ENCODE measurements at regions of chr17 and their contacts with region 1.

Region 1: DNA sequence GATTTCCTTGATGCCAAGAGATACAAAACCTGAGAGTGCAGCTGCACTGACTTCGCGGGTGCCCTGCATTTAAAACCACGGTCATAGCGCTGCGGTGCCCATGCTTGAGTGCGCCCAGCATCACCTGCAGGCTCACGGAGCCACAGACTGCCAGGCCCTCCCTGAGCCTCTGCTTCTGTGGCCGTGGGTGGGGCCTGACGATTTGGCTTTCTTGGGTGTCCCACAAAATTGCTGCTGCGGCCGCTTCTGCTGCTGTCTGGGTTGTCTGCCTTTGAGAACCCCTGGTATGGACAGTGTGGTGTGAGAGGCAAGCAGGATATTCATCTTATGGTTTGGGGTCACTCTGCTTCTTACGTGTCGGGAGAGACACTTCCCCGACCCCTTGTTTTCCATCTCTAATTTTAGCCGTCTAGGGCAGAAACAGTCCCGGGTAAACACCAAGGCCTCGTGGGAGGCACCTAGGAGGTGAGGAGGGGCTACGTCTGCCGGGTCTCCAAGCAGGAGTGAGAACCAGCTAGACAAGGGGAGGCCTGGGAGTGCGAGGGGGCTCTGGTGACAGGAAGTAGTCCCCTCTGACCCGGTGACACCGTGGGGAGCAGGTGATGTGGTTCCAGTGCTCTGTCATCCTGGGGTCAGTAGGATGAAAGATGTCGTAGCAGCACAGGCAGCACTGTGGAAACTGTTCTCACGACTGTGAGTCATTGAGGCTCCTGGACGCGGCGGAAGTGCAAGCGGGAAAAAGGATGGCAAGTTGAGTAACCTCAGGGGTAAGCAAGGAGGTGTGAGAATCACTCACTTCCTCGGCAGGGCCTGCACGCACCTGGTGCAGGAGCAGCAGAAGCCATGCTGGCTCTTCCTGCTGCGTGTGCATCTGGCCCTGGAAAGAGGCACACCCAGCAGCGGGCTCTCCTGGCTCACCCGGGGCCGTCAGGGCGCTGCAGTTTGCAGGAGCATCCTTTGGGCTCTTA is 176.3 kb downstream of the RPTOR start:
- DNase-seq: peak; percentile 87
- ATAC-seq: peak; percentile 94
- H3K4me3 Mint-ChIP-seq: peak overlapping the region; percentile 46
- H3K27ac Mint-ChIP-seq: peak overlapping the region; percentile 88
- H3K4me1 Mint-ChIP-seq: peaks cover 51% of the 10 kb centered on the region
- H3K27me3 Mint-ChIP-seq: no peaks in the 10 kb centered on the region

Region 2: GRCh38 chr17:80307994-80308691 is 412.8 kb before region 1 on chr17:
- CTCF ChIA-PET with region 1: no interaction called
- POLR2A ChIA-PET with region 1: no interaction called
- intact Hi-C with region 1: no loop called
- DNase-seq: no peak
- ATAC-seq: no peak
- H3K4me3 Mint-ChIP-seq: no peak overlapping the region
- H3K27ac Mint-ChIP-seq: peak overlapping the region; percentile 84
- H3K4me1 Mint-ChIP-seq: peaks cover 12% of the 10 kb centered on the region
- H3K27me3 Mint-ChIP-seq: no peaks in the 10 kb centered on the region

Region 3: DNA sequence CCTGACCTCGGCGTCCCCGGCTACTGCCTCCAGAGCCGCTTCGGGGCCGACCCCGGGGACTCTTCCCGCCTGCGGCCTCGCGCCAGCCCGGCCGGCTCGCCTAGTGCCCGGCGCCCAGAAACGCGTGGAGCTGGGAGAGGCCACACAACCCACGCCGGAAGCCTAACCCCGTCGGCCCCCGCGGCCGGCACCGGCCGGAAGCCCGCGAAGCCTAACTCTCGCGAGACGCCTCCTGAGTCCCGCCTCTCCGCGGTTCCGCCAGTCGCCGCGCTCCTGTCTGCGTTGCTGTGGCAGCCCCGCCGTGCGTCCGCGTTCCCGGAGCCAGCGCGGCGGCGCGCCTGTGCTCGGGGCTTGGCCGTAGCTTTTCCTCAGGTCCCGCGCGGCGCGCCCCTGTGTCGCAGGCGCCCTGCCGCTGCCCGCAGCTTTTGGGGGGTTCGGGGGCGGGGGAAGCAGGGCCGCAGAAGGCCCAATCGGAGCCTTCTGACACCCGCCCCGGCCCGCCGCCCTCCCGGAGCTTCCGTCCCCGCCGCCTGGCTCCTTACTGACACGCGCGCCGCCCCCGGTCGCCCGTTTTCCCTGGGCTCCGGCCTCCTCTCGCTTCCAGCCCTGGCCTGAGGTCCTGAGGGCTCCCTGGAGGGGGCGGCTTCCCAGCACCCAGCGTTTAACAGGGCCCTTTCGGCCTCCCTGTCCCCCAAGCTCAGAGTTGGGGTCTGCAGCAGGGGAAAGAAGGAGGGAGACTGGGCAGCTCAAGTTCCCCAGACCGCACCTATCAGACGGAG is 266.1 kb before region 1 on chr17:
- CTCF ChIA-PET with region 1: no interaction called
- POLR2A ChIA-PET with region 1: no interaction called
- intact Hi-C with region 1: no loop called
- DNase-seq: peak; percentile 98
- ATAC-seq: peak; percentile 93
- H3K4me3 Mint-ChIP-seq: peak overlapping the region; percentile 99
- H3K27ac Mint-ChIP-seq: peak overlapping the region; percentile 94
- H3K4me1 Mint-ChIP-seq: peaks cover 23% of the 10 kb centered on the region
- H3K27me3 Mint-ChIP-seq: peaks cover 13% of the 10 kb centered on the region

Region 4: GRCh38 chr17:80855948-80856862 is 135.3 kb after region 1 on chr17:
- CTCF ChIA-PET with region 1: no interaction called
- POLR2A ChIA-PET with region 1: no interaction called
- intact Hi-C with region 1: loop called in 1 of 2 experiments (anchors 1 kb)
- DNase-seq: peak; percentile 95
- ATAC-seq: peak; percentile 98
- H3K4me3 Mint-ChIP-seq: peak overlapping the region; percentile 28
- H3K27ac Mint-ChIP-seq: peak overlapping the region; percentile 92
- H3K4me1 Mint-ChIP-seq: peaks cover 57% of the 10 kb centered on the region
- H3K27me3 Mint-ChIP-seq: no peaks in the 10 kb centered on the region